MCF 10A (cell line): ENCODE measurements at regions of chr7 and their contacts with region 1.

Region 1: GRCh38 chr7:155380221-155380861 is 77.6 kb upstream of the EN2 start:
- DNase-seq: peak; percentile 78
- H3K4me3 Mint-ChIP-seq: no peak overlapping the region
- H3K27ac Mint-ChIP-seq: no peak overlapping the region
- H3K4me1 Mint-ChIP-seq: peaks cover 8% of the 10 kb centered on the region
- H3K27me3 Mint-ChIP-seq: peaks cover 84% of the 10 kb centered on the region
- CTCF ChIP-seq: peak; percentile 61

Region 2: DNA sequence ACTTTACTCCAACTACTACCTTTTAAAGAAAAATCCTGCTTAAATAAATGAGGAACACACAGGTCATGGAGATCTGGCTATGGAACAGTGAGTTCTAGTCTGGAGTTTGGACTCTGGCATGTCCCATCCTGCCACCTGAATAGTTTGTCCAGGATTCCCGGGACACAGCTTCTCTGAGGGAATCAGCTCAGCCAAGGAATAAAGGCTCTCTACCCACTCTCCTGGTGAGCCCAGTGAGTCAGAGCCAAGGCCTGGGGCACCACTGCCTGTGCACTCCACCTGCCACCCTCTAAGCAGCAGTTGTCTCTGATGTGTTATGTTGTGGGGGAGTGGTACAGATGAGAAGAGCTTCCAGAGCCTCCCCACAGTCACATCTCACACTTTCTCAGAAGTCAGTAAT is 196.7 kb before region 1 on chr7:
- CTCF ChIA-PET with region 1: no interaction called
- POLR2A ChIA-PET with region 1: no interaction called
- intact Hi-C with region 1: no loop called
- DNase-seq: no peak
- H3K4me3 Mint-ChIP-seq: no peak overlapping the region
- H3K27ac Mint-ChIP-seq: no peak overlapping the region
- H3K4me1 Mint-ChIP-seq: no peaks in the 10 kb centered on the region
- H3K27me3 Mint-ChIP-seq: no peaks in the 10 kb centered on the region
- CTCF ChIP-seq: no peak

Region 3: GRCh38 chr7:155506854-155507337 is 126.6 kb after region 1 on chr7:
- CTCF ChIA-PET with region 1: interaction called, 3 read pairs
- POLR2A ChIA-PET with region 1: no interaction called
- intact Hi-C with region 1: loop called (anchors 10 kb)
- DNase-seq: no peak
- H3K4me3 Mint-ChIP-seq: peak overlapping the region; percentile 21
- H3K27ac Mint-ChIP-seq: no peak overlapping the region
- H3K4me1 Mint-ChIP-seq: peaks cover 6% of the 10 kb centered on the region
- H3K27me3 Mint-ChIP-seq: peaks cover 100% of the 10 kb centered on the region
- CTCF ChIP-seq: no peak

Region 4: GRCh38 chr7:155543011-155543876 is 162.9 kb after region 1 on chr7:
- CTCF ChIA-PET with region 1: interaction called, 10 read pairs
- POLR2A ChIA-PET with region 1: no interaction called
- intact Hi-C with region 1: no loop called
- DNase-seq: no peak
- H3K4me3 Mint-ChIP-seq: no peak overlapping the region
- H3K27ac Mint-ChIP-seq: no peak overlapping the region
- H3K4me1 Mint-ChIP-seq: peaks cover 6% of the 10 kb centered on the region
- H3K27me3 Mint-ChIP-seq: peaks cover 12% of the 10 kb centered on the region
- CTCF ChIP-seq: no peak

Region 5: GRCh38 chr7:155738652-155739537 is 358.6 kb after region 1 on chr7:
- CTCF ChIA-PET with region 1: interaction called, 5 read pairs
- POLR2A ChIA-PET with region 1: no interaction called
- intact Hi-C with region 1: loop called (anchors 1 kb)
- DNase-seq: peak; percentile 83
- H3K4me3 Mint-ChIP-seq: no peak overlapping the region
- H3K27ac Mint-ChIP-seq: no peak overlapping the region
- H3K4me1 Mint-ChIP-seq: no peaks in the 10 kb centered on the region
- H3K27me3 Mint-ChIP-seq: no peaks in the 10 kb centered on the region
- CTCF ChIP-seq: peak; percentile 59

Region 6: GRCh38 chr7:155763691-155764437 is 383.5 kb after region 1 on chr7:
- CTCF ChIA-PET with region 1: interaction called, 18 read pairs
- POLR2A ChIA-PET with region 1: no interaction called
- intact Hi-C with region 1: loop called (anchors 1 kb)
- DNase-seq: no peak
- H3K4me3 Mint-ChIP-seq: no peak overlapping the region
- H3K27ac Mint-ChIP-seq: no peak overlapping the region
- H3K4me1 Mint-ChIP-seq: no peaks in the 10 kb centered on the region
- H3K27me3 Mint-ChIP-seq: no peaks in the 10 kb centered on the region
- CTCF ChIP-seq: no peak

Region 7: GRCh38 chr7:155769701-155770100 is 389.4 kb after region 1 on chr7:
- CTCF ChIA-PET with region 1: interaction called, 18 read pairs
- POLR2A ChIA-PET with region 1: interaction called, 4 read pairs
- intact Hi-C with region 1: loop called (anchors 1 kb)
- DNase-seq: no peak
- H3K4me3 Mint-ChIP-seq: no peak overlapping the region
- H3K27ac Mint-ChIP-seq: no peak overlapping the region
- H3K4me1 Mint-ChIP-seq: no peaks in the 10 kb centered on the region
- H3K27me3 Mint-ChIP-seq: no peaks in the 10 kb centered on the region
- CTCF ChIP-seq: no peak

Region 8: GRCh38 chr7:155774947-155775346 is 394.6 kb after region 1 on chr7:
- CTCF ChIA-PET with region 1: interaction called, 13 read pairs
- POLR2A ChIA-PET with region 1: interaction called, 4 read pairs
- intact Hi-C with region 1: no loop called
- DNase-seq: no peak
- H3K4me3 Mint-ChIP-seq: no peak overlapping the region
- H3K27ac Mint-ChIP-seq: no peak overlapping the region
- H3K4me1 Mint-ChIP-seq: no peaks in the 10 kb centered on the region
- H3K27me3 Mint-ChIP-seq: no peaks in the 10 kb centered on the region
- CTCF ChIP-seq: no peak